ENCODE measurements at regions of chr11 and their contacts with region 1.

Region 1: GRCh38 chr11:8813658-8814057 is 97.3 kb upstream of the AKIP1 start:
- DNase-seq: peak; percentile 89
- ATAC-seq: peak; percentile 80
- H3K4me3 Mint-ChIP-seq: no peak overlapping the region
- H3K27ac Mint-ChIP-seq: no peak overlapping the region
- H3K4me1 Mint-ChIP-seq: peaks cover 25% of the 10 kb centered on the region
- H3K27me3 Mint-ChIP-seq: no peaks in the 10 kb centered on the region
- CTCF ChIP-seq: peak; percentile 93

Region 2: GRCh38 chr11:8688414-8689362 is 125.0 kb before region 1 on chr11:
- CTCF ChIA-PET with region 1: interaction called, 12 read pairs
- POLR2A ChIA-PET with region 1: interaction called, 11 read pairs
- DNase-seq: peak; percentile 95
- ATAC-seq: peak; percentile 79
- H3K4me3 Mint-ChIP-seq: peak overlapping the region; percentile 88
- H3K27ac Mint-ChIP-seq: peak overlapping the region; percentile 99
- H3K4me1 Mint-ChIP-seq: peaks cover 59% of the 10 kb centered on the region
- H3K27me3 Mint-ChIP-seq: no peaks in the 10 kb centered on the region
- CTCF ChIP-seq: no peak

Region 3: DNA sequence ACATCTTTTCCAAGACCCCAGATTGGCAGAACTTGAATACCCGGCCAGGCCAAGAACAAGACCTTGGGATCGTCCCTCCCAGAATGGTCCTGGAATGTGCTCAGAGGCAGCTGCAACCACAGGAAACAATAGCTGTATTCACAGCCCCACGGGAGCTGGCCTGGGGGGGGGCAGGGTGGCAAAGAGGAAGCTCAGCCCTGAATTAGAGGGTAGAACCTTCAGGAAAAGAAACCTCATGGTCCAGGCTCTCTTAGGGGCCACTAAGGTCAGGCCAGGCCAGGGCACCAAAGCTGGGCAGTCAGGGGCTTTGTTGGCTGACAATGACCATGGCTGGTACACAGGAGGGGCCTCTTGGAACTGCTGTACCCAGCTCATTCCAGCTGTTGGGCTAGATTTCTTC is 113.8 kb before region 1 on chr11:
- CTCF ChIA-PET with region 1: interaction called, 5 read pairs
- POLR2A ChIA-PET with region 1: interaction called, 16 read pairs
- DNase-seq: peak; percentile 44
- ATAC-seq: no peak; the same call in 1 of the 2 replicates
- H3K4me3 Mint-ChIP-seq: no peak overlapping the region
- H3K27ac Mint-ChIP-seq: peak overlapping the region; percentile 96
- H3K4me1 Mint-ChIP-seq: peaks cover 59% of the 10 kb centered on the region
- H3K27me3 Mint-ChIP-seq: no peaks in the 10 kb centered on the region
- CTCF ChIP-seq: no peak

Region 4: DNA sequence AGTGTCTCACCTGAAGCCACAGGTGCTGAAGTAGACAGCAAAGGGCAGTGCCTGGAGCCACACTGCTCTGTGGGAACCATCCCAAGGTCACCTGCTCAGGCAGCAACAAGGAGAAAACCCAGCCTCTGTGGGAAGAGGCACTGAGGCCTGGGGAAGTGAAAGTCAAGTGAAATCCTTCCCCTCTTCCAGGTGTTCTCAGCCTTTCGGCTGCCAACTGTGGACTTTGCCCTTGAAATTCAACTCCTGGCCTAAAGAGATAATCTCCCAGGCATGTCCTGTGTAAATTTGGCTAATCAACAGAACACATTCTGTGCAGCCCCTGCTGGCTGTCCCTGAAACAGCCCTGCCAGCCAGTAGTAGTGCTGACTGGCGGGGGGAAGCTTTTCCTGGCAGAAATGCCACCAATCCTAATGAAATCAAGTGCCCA is 19.0 kb before region 1 on chr11:
- CTCF ChIA-PET with region 1: interaction called, 11 read pairs
- POLR2A ChIA-PET with region 1: interaction called, 3 read pairs
- DNase-seq: no peak
- ATAC-seq: peak; percentile 92
- H3K4me3 Mint-ChIP-seq: no peak overlapping the region
- H3K27ac Mint-ChIP-seq: peak overlapping the region; percentile 34; the same call in 1 of the 2 replicates
- H3K4me1 Mint-ChIP-seq: peaks cover 15% of the 10 kb centered on the region
- H3K27me3 Mint-ChIP-seq: no peaks in the 10 kb centered on the region
- CTCF ChIP-seq: peak; percentile 27; the same call in 1 of the 2 replicates

Region 5: DNA sequence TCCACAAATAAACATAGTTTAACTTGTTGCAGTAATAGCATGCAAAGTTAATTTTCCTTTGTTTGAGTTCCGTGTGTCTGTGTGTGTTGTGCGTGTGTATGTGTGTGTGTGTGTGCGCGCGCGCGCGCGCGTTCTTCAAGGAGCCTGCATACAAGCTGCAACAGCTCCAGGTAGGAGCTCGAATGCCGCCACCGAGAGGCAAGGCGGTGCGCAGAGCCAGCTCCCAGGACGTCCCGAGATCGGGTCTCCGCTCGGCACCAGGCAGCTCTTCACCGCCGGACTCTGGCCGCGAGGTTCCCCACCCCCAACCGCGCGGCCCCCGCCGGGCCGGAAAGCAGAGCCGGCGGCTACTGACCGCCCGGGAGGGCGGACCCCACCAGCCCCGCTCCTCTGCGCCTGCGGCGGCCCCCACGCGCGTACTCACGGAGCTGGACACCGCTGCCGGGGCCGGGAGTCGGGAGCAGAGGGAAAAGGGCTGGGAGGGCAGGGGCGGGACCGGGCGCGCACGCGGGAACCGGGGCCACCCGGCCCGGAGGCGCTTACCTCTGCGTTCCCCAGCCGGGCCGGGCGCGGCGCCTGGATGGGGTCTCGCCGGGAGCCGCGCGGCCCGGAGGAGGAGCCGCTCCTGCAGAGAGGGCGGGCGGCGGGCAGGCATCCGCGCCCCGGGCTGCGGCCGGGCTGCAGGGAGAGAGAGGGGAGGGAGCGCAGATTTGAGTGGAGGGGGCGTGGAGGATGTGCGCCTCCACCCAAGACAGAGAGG is 56.9 kb after region 1 on chr11:
- CTCF ChIA-PET with region 1: interaction called, 14 read pairs
- POLR2A ChIA-PET with region 1: interaction called, 9 read pairs
- DNase-seq: peak; percentile 75
- ATAC-seq: peak; percentile 85
- H3K4me3 Mint-ChIP-seq: peak overlapping the region; percentile 79
- H3K27ac Mint-ChIP-seq: 0 out of 2 replicates have a peak overlapping the region, but pooled peaks have one; percentile 19
- H3K4me1 Mint-ChIP-seq: peaks cover 11% of the 10 kb centered on the region
- H3K27me3 Mint-ChIP-seq: no peaks in the 10 kb centered on the region
- CTCF ChIP-seq: no peak

Measured in WTC11 (cell line).